ENCODE measurements at regions of chr15 and their contacts with region 1.

Region 1: GRCh38 chr15:63277038-63277892 is at the start of gene APH1B:
- DNase-seq: peak; percentile 83 to 96 (median 90)
- ATAC-seq: peak; percentile 95
- H3K4me3 ChIP-seq: peak within 1 kb of the TSS; percentile 67 to 68
- H3K27ac ChIP-seq: peak within 1 kb of the TSS; percentile 82 to 84
- H3K4me1 ChIP-seq: peaks cover 12 to 32% of the 10 kb centered on the region in 2 donors
- H3K27me3 ChIP-seq: no peaks in the 10 kb centered on the region
- CTCF ChIP-seq: no peak
- polyA plus RNA-seq, gene APH1B: 26.3 to 30.3 (median 29.4) TPM

Region 2: GRCh38 chr15:63188926-63189871 is 88.1 kb before region 1 on chr15 and contains the start of gene RAB8B:
- intact Hi-C with region 1: loop called in 1 of 2 experiments (anchors 5 kb)
- DNase-seq: peak; percentile 94 to 99 (median 98)
- ATAC-seq: peak; percentile 99
- H3K4me3 ChIP-seq: peak within 1 kb of the TSS; percentile 45 to 68
- H3K27ac ChIP-seq: peak within 1 kb of the TSS; percentile 67 to 87
- H3K4me1 ChIP-seq: peaks cover 8 to 45% of the 10 kb centered on the region in 2 donors
- H3K27me3 ChIP-seq: no peaks in the 10 kb centered on the region
- CTCF ChIP-seq: peak in 1 of 2 donors; percentile 17
- polyA plus RNA-seq, gene RAB8B: 45.1 to 62.2 (median 57.2) TPM

Region 3: DNA sequence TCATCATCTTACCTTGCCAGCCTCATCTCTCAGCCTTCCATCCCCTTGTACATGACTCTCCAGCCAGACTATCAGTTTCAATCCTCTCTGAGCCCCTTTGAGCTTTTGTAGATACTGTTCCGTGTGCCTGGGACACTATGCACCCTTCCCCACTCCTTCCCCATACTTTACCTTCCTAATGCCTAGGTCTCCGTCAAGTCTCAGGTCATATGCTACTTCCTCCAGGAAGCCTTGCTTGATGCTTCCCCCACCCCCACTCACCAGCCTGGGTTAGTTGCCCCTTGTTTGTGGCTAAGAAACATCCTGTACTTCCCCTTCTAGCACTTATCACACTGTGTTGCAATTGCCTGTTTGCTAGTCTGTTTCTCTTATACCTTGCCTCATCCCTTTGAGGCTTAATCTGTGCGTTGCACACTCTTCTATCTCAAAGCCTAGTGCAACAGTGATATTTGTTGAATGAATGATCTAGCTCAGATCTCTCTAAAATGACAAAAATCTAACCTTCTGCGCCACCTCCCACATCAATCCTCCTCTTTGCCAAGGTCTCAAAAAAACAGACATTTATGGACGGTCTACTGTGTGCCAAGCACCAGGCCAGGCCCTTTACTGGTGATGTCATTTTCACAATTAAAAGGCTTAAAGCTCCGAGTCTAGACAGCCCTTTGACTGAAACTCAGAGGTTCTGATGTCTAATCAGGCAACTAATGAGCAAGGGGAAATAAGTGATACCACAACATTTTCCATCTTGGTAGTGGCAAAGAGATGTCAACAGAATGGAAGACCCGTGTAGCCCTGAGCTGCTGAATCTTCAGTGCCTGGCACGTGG is 220.6 kb after region 1 on chr15:
- intact Hi-C with region 1: no loop called
- DNase-seq: peak in 2 of 4 donors; percentile 75 to 82
- ATAC-seq: peak; percentile 19
- H3K4me3 ChIP-seq: peak overlapping the region in 1 of 2 donors; percentile 24
- H3K27ac ChIP-seq: peak overlapping the region; percentile 62 to 100
- H3K4me1 ChIP-seq: peaks cover 31 to 96% of the 10 kb centered on the region in 2 donors
- H3K27me3 ChIP-seq: no peaks in the 10 kb centered on the region
- CTCF ChIP-seq: no peak

Measured in left lung (tissue), 14 donors.